OCI-LY7 (cell line): ENCODE measurements at regions of chr11 and their contacts with region 1.

Region 1: GRCh38 chr11:68206187-68206601 is 6.9 kb downstream of the KMT5B start:
- DNase-seq: peak; percentile 77
- H3K4me3 ChIP-seq: no peak overlapping the region
- H3K27ac ChIP-seq: no peak overlapping the region
- H3K4me1 ChIP-seq: peaks cover 22% of the 10 kb centered on the region
- CTCF ChIP-seq: peak; percentile 91

Region 2: DNA sequence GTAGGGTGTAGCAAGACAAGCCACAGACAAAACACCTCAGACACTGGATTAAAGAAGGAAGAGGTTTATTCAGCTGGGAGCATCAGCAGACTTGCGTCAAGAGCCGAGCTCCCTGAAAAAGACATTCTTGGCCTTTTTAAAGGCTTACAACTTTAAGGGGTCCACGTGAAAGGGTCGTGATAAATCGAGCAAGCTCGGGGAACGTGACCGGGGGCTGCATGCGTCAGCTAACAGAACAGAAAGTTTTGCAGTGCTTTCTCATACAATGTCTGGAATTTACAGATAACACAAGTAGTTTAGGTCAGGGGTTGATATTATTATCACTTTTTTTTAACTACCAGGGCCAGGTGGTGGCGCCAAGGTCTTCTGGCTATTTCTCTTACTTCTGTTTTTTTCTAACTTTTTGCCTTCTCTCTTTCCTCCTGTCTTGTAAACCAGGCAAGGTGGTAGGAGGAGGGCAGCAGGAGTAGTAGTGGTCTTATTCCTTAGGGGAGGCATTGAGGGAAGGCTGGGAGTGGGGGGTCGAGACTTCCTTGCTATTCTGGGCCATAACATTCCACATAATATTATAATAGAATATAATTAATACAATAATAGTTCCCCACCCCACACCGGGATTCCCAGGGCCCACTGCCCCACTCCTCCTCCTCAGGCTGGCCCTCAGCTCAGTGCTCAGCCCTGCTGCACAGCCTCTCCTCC is 196.7 kb before region 1 on chr11:
- CTCF ChIA-PET with region 1: no interaction called
- POLR2A ChIA-PET with region 1: no interaction called
- intact Hi-C with region 1: loop called (anchors 1 kb)
- DNase-seq: peak; percentile 68
- H3K4me3 ChIP-seq: peak overlapping the region; percentile 18
- H3K27ac ChIP-seq: peak overlapping the region; percentile 52
- H3K4me1 ChIP-seq: peaks cover 48% of the 10 kb centered on the region
- CTCF ChIP-seq: peak; percentile 76

Region 3: DNA sequence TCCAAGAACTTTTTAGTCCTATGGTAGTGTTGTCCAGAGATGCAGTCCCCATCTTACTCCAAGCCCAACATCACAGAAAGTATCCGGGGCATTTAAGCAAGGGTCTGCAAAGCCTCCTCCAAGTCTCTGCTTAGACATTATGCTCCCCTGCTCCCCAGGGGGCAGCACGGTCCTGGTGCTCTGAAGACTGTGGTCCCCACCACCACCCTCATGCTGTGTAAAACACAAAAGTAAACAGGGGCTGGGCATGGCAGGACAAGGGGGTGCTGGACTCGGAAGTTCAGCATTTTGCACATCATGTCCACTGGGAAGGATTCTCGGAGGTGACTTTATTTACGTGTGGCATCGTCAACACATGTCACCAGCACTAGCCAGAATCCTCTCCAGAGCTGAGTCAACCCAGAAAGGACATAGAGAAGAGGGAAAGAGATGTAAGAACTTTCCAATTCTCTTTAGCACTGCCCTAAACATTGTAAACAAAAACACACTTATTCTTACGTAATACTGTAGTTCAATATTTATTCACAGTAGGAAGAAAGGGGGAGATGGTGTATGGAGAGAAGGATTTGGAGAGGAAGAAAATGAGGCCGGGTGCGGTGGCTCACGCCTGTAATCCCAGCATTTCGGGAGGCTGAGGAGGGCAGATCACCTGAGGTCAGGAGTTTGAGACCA is 129.7 kb before region 1 on chr11:
- CTCF ChIA-PET with region 1: no interaction called
- POLR2A ChIA-PET with region 1: no interaction called
- intact Hi-C with region 1: loop called (anchors 5 kb)
- DNase-seq: peak; percentile 20
- H3K4me3 ChIP-seq: no peak overlapping the region
- H3K27ac ChIP-seq: no peak overlapping the region
- H3K4me1 ChIP-seq: no peaks in the 10 kb centered on the region
- CTCF ChIP-seq: peak; percentile 64

Region 4: GRCh38 chr11:68256331-68256741 is 50.1 kb after region 1 on chr11:
- CTCF ChIA-PET with region 1: no interaction called
- POLR2A ChIA-PET with region 1: no interaction called
- intact Hi-C with region 1: no loop called
- DNase-seq: no peak
- H3K4me3 ChIP-seq: no peak overlapping the region
- H3K27ac ChIP-seq: no peak overlapping the region
- H3K4me1 ChIP-seq: peaks cover 6% of the 10 kb centered on the region
- CTCF ChIP-seq: no peak

Region 5: DNA sequence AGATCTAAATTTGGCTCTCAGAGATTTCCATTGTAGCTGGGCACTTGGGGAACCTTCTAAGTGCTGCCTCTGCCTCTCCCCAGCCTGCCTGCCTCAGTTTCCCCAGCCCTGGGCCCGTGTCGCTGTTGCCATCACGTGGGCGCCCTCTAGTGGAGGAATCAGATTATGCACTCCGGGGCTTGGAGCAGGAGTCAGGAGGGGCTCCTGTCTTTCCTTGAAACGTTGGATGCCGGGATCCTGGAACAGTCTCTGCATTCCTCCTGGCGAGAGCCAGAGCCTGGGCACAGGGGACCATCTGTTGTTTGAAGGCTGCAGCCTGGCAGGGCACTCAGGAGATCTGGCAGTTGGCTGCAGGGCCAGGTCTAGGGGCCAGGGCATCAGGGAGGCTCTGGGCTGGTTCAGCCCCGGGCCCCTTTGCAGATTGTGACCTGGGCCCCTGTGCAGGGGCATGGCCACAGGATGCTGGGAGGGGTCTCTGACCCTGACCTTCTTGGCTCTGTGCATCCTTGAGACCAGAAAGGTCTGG is 177.8 kb after region 1 on chr11:
- CTCF ChIA-PET with region 1: no interaction called
- POLR2A ChIA-PET with region 1: interaction called, 3 read pairs
- intact Hi-C with region 1: loop called (anchors 5 kb)
- DNase-seq: peak; percentile 56
- H3K4me3 ChIP-seq: no peak overlapping the region
- H3K27ac ChIP-seq: no peak overlapping the region
- H3K4me1 ChIP-seq: peaks cover 24% of the 10 kb centered on the region
- CTCF ChIP-seq: peak; percentile 99

Region 6: GRCh38 chr11:68436985-68437926 is 231.1 kb after region 1 on chr11:
- CTCF ChIA-PET with region 1: no interaction called
- POLR2A ChIA-PET with region 1: no interaction called
- intact Hi-C with region 1: no loop called
- DNase-seq: no peak
- H3K4me3 ChIP-seq: no peak overlapping the region
- H3K27ac ChIP-seq: no peak overlapping the region
- H3K4me1 ChIP-seq: peaks cover 24% of the 10 kb centered on the region
- CTCF ChIP-seq: no peak

Region 7: DNA sequence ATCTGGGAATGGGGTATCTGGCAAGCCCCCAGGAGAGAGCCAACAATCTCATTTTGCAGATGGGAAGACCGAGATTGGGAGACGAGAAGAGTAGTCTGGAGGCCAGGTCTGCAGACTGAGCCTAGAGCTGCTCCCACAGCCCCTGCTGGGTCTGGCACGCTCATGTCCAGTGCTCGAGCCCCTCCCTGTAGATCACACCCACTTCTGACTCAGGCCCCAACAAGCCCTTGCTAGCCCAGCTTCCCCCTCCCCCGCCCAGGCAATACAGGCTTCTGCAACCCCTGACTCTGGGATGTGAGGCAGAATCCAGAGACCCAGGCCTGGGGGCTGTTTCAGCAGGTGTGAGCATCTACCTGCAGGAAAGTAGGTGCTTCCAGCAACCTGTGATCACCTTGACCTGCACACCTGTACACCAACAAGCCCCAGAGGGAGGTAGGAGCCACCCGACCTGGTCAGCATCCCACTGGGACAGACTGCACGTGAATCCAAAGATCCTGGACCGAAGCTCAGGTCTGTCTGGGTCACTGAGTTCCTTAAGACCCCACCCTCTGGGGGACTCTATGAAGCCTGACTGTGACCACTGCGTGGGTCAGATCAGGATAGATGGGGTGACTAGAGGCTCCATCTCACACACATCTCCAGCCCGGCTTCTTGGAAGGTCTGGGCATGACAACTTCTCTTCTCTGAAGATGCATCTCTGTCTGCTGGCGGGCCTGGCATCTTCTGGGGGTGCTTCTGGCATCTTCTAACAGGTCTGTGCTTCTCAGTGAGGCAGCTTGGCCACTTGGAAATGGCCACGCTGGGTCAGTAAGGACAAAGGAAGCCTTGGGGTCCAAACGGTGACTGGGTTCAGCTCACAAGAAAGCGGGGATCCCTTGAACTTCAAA is 1304.5 kb after region 1 on chr11:
- CTCF ChIA-PET with region 1: no interaction called
- POLR2A ChIA-PET with region 1: no interaction called
- intact Hi-C with region 1: no loop called
- DNase-seq: no peak
- H3K4me3 ChIP-seq: no peak overlapping the region
- H3K27ac ChIP-seq: no peak overlapping the region
- H3K4me1 ChIP-seq: no peaks in the 10 kb centered on the region
- CTCF ChIP-seq: no peak